ENCODE measurements at regions of chr1 and their contacts with region 1.

Region 1: GRCh38 chr1:53376041-53376461 is 48.2 kb upstream of the LRP8 start:
- DNase-seq: no peak
- ATAC-seq: no peak

Region 2: DNA sequence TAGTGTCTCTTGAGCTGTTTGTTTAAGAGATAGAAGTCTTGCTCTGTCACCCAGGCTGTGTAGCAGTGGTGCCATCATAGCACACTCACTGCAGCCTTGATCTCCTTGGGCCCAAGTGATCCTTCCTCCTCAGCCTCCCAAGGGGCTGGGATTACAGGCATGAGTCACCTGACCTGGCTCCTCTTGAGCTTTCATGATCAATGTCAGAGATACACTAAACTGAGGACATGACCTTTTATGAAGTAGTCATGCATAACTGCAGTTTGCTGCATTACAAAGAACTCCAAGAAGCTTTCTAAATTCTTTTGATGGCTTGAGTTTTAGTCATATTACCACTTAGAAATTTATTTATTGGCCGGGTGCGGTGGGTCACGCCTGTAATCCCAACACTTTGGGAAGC is 1087.8 kb before region 1 on chr1:
- intact Hi-C with region 1: no loop called
- DNase-seq: no peak
- ATAC-seq: no peak

Region 3: DNA sequence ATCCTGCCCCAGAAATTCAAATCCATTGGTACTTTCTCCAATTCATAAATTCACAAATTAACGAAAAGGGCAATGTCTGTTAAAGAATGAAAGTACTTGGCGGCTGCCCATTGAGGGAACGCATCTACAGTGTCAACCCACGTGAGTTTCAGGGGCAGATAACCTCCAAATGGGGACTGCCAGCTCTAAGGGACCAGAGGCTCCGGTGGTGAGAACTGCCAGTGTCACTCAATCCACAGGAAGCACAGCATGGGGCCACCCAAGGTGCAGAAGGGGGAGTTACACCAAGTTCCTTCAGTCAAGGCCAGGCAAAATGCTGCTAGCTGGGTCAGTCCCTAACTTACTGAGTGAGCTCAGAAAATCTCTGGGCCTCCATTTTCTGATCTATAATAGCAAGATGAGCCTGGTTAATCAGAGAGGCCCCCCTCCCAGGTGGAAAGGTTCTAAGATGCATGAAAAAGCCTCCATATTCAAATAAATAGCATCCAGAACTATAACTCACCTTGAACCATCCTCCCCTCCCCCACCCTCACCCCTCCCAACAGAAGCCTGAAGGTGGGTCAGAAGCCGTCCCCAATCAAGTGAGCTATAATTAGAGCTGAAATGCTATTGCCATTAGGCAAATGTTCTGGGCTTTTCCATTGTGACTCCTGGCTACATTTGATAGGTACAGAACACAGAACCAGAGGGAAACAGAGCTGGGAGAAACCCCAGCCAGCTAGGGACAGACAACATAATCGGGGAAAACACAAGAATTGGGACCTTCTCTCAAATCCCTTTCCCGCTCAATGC is 89.9 kb before region 1 on chr1:
- intact Hi-C with region 1: loop called (anchors 5 kb)
- DNase-seq: no peak
- ATAC-seq: peak; percentile 52

Region 4: DNA sequence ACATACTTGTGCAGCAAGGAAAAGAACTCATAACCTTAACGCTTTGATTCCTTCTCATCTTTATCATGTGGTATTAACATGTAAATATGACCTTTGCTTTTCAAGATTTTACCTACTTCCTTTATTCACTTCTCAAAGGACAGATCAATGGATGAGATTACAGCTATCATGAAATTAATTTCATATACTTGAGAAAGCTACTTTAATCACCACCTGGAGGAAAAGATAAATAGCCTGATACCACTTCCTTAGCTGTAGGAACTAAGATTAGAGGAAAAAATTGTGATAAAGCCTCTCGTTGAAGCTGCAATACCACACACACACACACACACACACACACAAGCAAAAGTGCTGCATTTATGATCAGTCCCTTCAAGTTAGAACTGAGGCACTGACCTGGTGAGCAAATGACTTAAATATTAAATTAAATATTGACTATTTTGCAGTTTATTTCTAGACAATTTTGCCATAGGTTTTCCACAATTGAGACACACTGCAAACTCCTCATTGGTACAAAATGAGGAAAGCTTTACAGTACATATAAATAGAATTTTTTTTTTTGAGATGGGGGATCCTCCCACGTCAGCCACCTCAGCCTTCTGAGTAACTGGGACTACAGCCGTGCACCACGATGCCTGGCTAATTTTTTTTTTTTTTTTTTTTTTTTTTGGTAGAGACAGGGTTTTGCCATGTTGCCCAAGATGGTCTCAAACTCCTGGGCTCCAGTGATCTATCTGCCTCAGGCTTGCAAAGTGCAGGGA is 55.9 kb after region 1 on chr1:
- intact Hi-C with region 1: no loop called
- DNase-seq: no peak
- ATAC-seq: no peak

Measured in Right ventricle myocardium superior (tissue), 1 donor.